ENCODE measurements at regions of chr12 and their contacts with region 1.

Region 1: DNA sequence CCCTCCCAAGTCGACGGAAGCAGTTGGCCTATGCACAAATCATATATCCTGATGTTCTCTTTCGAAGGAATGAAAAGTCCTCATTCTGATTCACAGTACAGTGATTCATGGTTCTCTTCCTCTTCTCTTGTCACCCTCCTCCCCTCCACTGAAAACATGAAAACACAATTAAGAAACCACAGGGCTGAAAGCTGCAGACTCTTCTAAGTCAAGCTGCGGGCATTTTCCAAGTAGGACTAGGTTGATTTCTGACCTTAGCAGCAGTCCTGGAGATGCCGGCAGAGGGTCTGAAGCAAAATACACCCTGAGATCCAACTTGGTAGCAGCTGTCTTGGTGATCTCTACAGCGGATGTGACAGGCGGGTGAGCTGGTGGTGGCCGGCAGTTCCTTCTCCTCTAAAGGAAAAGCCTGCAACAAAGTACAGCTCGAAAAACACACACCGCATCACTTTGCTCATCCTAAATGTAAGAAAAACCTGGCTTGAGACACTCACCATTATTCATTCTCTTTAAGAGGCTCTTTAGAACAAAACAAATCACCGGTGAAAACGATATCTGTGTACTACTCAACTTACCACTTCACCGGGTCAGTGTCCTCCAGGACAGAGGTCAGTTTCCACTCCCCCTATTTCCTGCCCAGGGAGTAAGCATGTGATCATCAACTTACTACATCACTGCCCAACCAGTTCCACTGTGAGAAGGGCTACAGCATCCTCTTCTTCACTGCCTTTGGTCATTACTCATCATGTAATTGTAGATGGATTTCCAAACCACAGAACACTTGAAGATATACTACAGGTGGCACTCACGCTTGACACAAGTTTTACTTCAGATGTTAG is 6.0 kb downstream of the TMCC3 start:
- DNase-seq: peak; percentile 95
- H3K4me3 ChIP-seq: no peak overlapping the region
- H3K27ac ChIP-seq: peak overlapping the region; percentile 76
- H3K4me1 ChIP-seq: peaks cover 58% of the 10 kb centered on the region
- H3K27me3 ChIP-seq: no peaks in the 10 kb centered on the region
- CTCF ChIP-seq: no peak

Region 2: DNA sequence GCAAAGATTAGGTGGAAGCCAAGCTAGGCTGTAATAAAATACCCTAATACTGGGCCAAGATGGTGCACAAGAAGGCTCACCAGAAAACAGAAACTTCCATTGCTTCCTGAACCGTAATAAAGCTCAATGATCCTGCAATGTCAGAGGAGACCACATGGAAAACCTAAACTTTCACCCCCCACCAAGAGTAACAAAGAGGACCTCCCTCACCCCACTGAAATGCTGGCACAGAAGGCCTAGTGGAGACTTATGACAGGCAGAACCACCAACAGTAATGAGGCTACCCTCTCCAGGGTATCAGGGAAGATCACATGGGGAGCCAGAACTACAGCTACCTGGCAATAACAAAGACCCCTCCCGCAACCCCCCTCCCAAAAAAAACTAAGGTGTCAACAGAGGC is 227.7 kb before region 1 on chr12:
- CTCF ChIA-PET with region 1: no interaction called
- dilution Hi-C with region 1: no loop called
- in situ Hi-C with region 1: no loop called
- intact Hi-C with region 1: no loop called
- DNase-seq: no peak
- H3K4me3 ChIP-seq: no peak overlapping the region
- H3K27ac ChIP-seq: no peak overlapping the region
- H3K4me1 ChIP-seq: no peaks in the 10 kb centered on the region
- H3K27me3 ChIP-seq: no peaks in the 10 kb centered on the region
- CTCF ChIP-seq: no peak

Region 3: DNA sequence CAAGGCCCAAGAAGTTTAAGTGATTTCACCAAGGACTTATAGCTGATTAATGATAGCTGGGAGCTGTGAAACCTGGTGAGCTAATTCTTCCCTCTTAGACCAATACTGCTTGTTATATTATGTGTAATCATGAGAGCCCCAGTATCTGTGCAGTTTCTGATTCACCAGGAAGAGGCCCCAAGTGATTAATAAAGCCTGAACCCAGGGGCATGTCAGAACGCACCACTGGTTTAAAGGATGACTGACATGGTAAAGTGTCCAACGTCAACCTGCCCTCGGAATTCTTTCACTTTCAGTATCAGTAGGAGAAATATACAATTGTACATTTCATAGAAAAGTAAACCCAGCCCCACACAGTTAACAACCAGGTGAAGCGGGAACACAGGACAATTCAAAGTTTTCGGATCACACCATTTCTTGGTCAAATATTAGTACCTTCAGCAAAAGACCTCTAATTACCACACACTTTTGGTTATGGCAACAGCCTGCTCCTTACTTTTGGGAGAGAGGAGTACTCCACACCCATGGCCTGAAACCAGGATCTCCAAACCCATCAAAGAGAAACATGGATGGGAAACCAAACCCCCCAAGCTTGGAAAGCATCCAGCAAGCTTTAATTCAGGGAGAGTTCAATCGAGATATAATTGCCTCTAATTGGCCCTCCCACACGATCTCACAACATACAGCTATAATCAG is 22.5 kb before region 1 on chr12:
- CTCF ChIA-PET with region 1: interaction called, 5 read pairs
- dilution Hi-C with region 1: no loop called
- in situ Hi-C with region 1: no loop called
- intact Hi-C with region 1: loop called (anchors 1 kb)
- DNase-seq: peak; percentile 99
- H3K4me3 ChIP-seq: peak overlapping the region; percentile 38 to 46 (median 44)
- H3K27ac ChIP-seq: peak overlapping the region; percentile 100
- H3K4me1 ChIP-seq: peaks cover 62% of the 10 kb centered on the region
- H3K27me3 ChIP-seq: no peaks in the 10 kb centered on the region
- CTCF ChIP-seq: no peak